CD4-positive, alpha-beta T cell (primary cell): ENCODE measurements at regions of chr10 and their contacts with region 1.

Region 1: DNA sequence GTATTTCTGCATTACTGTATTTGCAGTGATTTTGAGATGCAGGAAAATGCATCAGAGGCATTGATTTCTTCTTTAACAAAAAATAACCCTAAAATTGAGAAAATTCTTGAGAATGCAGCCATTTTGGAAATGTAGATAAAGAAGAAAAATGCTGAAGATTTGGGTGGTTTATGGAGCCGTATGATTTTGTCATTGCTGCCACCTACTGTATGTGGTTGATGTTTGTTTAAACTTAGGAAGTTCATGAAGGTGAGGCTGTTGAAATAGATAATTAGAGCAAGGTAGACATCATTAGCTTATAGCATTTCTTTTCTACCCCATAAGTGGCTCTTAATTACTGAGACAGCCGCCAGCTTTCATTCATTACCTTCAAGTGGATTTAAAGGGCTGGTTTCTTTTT is 92.1 kb upstream of the SAMD8 start:
- DNase-seq: peak in 3 of 14 experiments; percentile 58 to 62 (median 61)
- ATAC-seq: peak; percentile 66
- H3K4me3 ChIP-seq: no peak overlapping the region
- H3K4me3 Mint-ChIP-seq: no peak overlapping the region
- H3K27ac ChIP-seq: no peak overlapping the region
- H3K27ac Mint-ChIP-seq: peak overlapping the region; percentile 68
- H3K4me1 ChIP-seq: peaks cover 22% of the 10 kb centered on the region
- H3K4me1 Mint-ChIP-seq: peaks cover 35% of the 10 kb centered on the region
- H3K27me3 ChIP-seq: no peaks in the 10 kb centered on the region
- H3K27me3 Mint-ChIP-seq: no peaks in the 10 kb centered on the region
- CTCF ChIP-seq: peak; percentile 63

Region 2: GRCh38 chr10:74244097-74244685 is 775.2 kb before region 1 on chr10:
- CTCF ChIA-PET with region 1: interaction called, 3 read pairs
- POLR2A ChIA-PET with region 1: no interaction called
- intact Hi-C with region 1: loop called (anchors 1 to 5 kb)
- DNase-seq: peak in 4 of 14 experiments; percentile 49 to 70 (median 60)
- ATAC-seq: no peak
- H3K4me3 ChIP-seq: no peak overlapping the region
- H3K4me3 Mint-ChIP-seq: no peak overlapping the region
- H3K27ac ChIP-seq: no peak overlapping the region
- H3K27ac Mint-ChIP-seq: no peak overlapping the region
- H3K4me1 ChIP-seq: no peaks in the 10 kb centered on the region
- H3K4me1 Mint-ChIP-seq: no peaks in the 10 kb centered on the region
- H3K27me3 ChIP-seq: no peaks in the 10 kb centered on the region
- H3K27me3 Mint-ChIP-seq: no peaks in the 10 kb centered on the region
- CTCF ChIP-seq: peak; percentile 87

Region 3: GRCh38 chr10:74262856-74263255 is 756.5 kb before region 1 on chr10:
- CTCF ChIA-PET with region 1: no interaction called
- POLR2A ChIA-PET with region 1: no interaction called
- intact Hi-C with region 1: loop called (anchors 1 to 2 kb)
- DNase-seq: no peak
- ATAC-seq: no peak
- H3K4me3 ChIP-seq: no peak overlapping the region
- H3K4me3 Mint-ChIP-seq: no peak overlapping the region
- H3K27ac ChIP-seq: no peak overlapping the region
- H3K27ac Mint-ChIP-seq: no peak overlapping the region
- H3K4me1 ChIP-seq: peaks cover 4% of the 10 kb centered on the region
- H3K4me1 Mint-ChIP-seq: peaks cover 6% of the 10 kb centered on the region
- H3K27me3 ChIP-seq: no peaks in the 10 kb centered on the region
- H3K27me3 Mint-ChIP-seq: no peaks in the 10 kb centered on the region
- CTCF ChIP-seq: no peak

Region 4: DNA sequence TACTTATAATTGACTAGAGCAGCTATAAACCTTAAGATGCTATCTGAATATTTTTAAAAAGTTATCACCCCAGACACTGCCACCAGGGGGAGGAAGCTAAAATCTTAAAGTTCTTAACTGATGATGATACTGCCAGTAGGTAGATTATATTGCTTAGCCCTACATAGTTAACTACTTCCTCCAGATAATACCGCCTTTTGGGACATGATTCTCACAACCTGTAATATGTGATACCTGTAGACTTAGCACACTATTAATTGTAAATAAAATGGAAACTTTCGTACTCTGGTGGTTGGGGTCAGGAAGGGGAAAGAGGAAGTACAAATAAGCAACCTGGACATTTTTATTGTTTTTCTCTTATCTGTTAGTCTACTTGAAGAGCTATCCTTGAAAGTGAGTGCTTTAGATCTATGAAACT is 599.4 kb before region 1 on chr10:
- CTCF ChIA-PET with region 1: no interaction called
- POLR2A ChIA-PET with region 1: no interaction called
- intact Hi-C with region 1: loop called (anchors 1 to 5 kb)
- DNase-seq: peak in 10 of 14 experiments; percentile 5 to 63 (median 25)
- ATAC-seq: peak; percentile 60
- H3K4me3 ChIP-seq: no peak overlapping the region
- H3K4me3 Mint-ChIP-seq: no peak overlapping the region
- H3K27ac ChIP-seq: no peak overlapping the region
- H3K27ac Mint-ChIP-seq: no peak overlapping the region
- H3K4me1 ChIP-seq: no peaks in the 10 kb centered on the region
- H3K4me1 Mint-ChIP-seq: peaks cover 7% of the 10 kb centered on the region
- H3K27me3 ChIP-seq: no peaks in the 10 kb centered on the region
- H3K27me3 Mint-ChIP-seq: no peaks in the 10 kb centered on the region
- CTCF ChIP-seq: peak; percentile 74

Region 5: GRCh38 chr10:74738985-74739567 is 280.3 kb before region 1 on chr10:
- CTCF ChIA-PET with region 1: interaction called, 3 read pairs
- POLR2A ChIA-PET with region 1: no interaction called
- intact Hi-C with region 1: loop called (anchors 1 to 5 kb)
- DNase-seq: peak in 5 of 14 experiments; percentile 4 to 63 (median 55)
- ATAC-seq: peak; percentile 74
- H3K4me3 ChIP-seq: no peak overlapping the region
- H3K4me3 Mint-ChIP-seq: no peak overlapping the region
- H3K27ac ChIP-seq: no peak overlapping the region
- H3K27ac Mint-ChIP-seq: peak overlapping the region; percentile 73
- H3K4me1 ChIP-seq: peaks cover 17% of the 10 kb centered on the region
- H3K4me1 Mint-ChIP-seq: peaks cover 24% of the 10 kb centered on the region
- H3K27me3 ChIP-seq: no peaks in the 10 kb centered on the region
- H3K27me3 Mint-ChIP-seq: no peaks in the 10 kb centered on the region
- CTCF ChIP-seq: no peak

Region 6: GRCh38 chr10:75111367-75111906 is 92.1 kb after region 1 on chr10 and contains the start of gene SAMD8:
- CTCF ChIA-PET with region 1: no interaction called
- POLR2A ChIA-PET with region 1: no interaction called
- intact Hi-C with region 1: no loop called
- DNase-seq: peak; percentile 90 to 99 (median 94)
- ATAC-seq: peak; percentile 80
- H3K4me3 ChIP-seq: peak within 1 kb of the TSS; percentile 97
- H3K4me3 Mint-ChIP-seq: peak within 1 kb of the TSS; percentile 88
- H3K27ac ChIP-seq: peak within 1 kb of the TSS; percentile 92 to 95
- H3K27ac Mint-ChIP-seq: peak within 1 kb of the TSS; percentile 90
- H3K4me1 ChIP-seq: peaks cover 26% of the 10 kb centered on the region
- H3K4me1 Mint-ChIP-seq: peaks cover 62% of the 10 kb centered on the region
- H3K27me3 ChIP-seq: no peaks in the 10 kb centered on the region
- H3K27me3 Mint-ChIP-seq: no peaks in the 10 kb centered on the region
- CTCF ChIP-seq: no peak
- total RNA-seq, gene SAMD8: 34.1 to 37.4 TPM